ENCODE measurements at regions of chr11 and their contacts with region 1.

Region 1: DNA sequence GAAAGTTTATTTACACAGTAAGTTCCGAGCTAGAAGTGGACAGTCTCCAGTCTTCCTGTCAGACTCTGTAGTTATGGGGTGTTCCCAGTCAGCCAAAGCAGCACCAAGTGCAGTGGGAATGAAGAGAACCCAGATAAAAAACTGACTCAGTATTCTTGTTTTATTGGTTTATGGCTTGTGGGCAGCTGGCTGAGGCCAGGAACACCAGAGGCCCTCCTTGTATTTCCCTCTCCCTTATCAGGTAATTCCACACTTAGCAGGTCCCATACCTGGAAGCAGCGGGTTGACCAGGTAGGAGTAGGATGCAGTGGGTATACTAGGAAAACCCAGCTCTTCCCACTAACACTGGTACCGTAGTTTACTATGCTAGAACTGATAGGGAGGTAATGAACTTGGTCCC is 3.5 kb upstream of the BACE1-AS start:
- DNase-seq: no peak
- H3K4me3 ChIP-seq: no peak overlapping the region
- H3K27ac ChIP-seq: no peak overlapping the region
- H3K4me1 ChIP-seq: no peaks in the 10 kb centered on the region
- H3K27me3 ChIP-seq: no peaks in the 10 kb centered on the region
- CTCF ChIP-seq: no peak

Region 2: GRCh38 chr11:117239300-117239699 is 48.4 kb before region 1 on chr11:
- dilution Hi-C with region 1: loop called (anchors 5 kb)
- DNase-seq: no peak
- H3K4me3 ChIP-seq: no peak overlapping the region
- H3K27ac ChIP-seq: no peak overlapping the region
- H3K4me1 ChIP-seq: no peaks in the 10 kb centered on the region
- H3K27me3 ChIP-seq: no peaks in the 10 kb centered on the region
- CTCF ChIP-seq: peak in 1 of 3 experiments; percentile 10

Region 3: GRCh38 chr11:117395476-117396155 is 107.9 kb after region 1 on chr11:
- dilution Hi-C with region 1: no loop called
- DNase-seq: no peak
- H3K4me3 ChIP-seq: no peak overlapping the region
- H3K27ac ChIP-seq: no peak overlapping the region
- H3K4me1 ChIP-seq: no peaks in the 10 kb centered on the region
- H3K27me3 ChIP-seq: no peaks in the 10 kb centered on the region
- CTCF ChIP-seq: no peak

Measured in keratinocyte (primary cell).